Mammary epithelial cell (primary cell): ENCODE measurements at regions of chr1 and their contacts with region 1.

Region 1: GRCh38 chr1:39158327-39159086 is 46.0 kb upstream of the MACF1 start:
- DNase-seq: peak; percentile 82
- H3K4me3 ChIP-seq: peak overlapping the region; percentile 17 to 30 (median 24)
- H3K27ac ChIP-seq: peak overlapping the region; percentile 98
- H3K4me1 ChIP-seq: peaks cover 61% of the 10 kb centered on the region
- H3K27me3 ChIP-seq: no peaks in the 10 kb centered on the region
- CTCF ChIP-seq: no peak

Region 2: DNA sequence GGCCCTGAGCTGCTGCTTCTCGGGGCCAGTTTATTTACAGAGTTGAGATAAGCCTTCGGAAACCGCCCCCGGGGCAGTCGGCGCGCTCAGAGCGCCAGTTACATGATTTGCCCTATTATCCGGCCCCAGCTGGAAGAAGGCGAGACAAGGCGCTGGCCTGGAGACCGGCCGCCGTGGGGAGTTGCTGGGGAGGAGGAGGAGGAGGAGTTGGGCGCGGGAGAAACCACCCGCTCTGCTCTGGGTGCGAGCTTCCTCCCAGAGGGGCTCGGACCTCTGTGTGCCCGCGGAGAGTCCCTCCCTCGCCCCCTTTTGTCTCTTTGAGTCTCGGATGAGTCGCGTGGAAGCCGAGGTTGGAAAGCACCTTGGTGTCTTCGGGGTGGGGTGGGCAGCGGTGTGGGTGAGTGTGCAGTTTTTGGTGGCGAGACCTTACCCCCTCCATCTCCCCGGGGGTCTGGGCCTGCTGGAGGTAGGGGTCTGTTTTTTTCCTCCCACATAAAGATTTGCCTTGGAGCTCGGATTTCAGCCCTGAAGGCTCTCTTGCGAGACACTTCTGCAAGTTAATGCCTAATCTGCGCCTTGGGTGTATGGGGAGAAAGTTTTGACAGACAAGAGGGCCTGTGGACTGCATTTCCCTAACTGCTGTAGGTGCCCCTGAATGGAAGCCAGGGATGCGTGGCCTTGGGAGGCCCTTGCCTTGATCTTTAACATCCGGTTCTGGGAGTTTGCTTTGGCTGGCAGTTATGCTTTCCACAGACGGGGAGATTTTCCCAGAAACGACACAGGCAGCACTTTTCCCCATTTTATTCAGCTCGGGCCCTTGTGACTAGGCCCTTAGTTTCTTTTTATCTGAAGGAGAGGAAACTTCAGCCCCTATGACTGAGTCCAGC is 52.4 kb before region 1 on chr1:
- CTCF ChIA-PET with region 1: no interaction called
- dilution Hi-C with region 1: no loop called
- in situ Hi-C with region 1: no loop called
- intact Hi-C with region 1: loop called (anchors 2 kb)
- DNase-seq: peak; percentile 53
- H3K4me3 ChIP-seq: peak overlapping the region; percentile 50 to 76 (median 63)
- H3K27ac ChIP-seq: peak overlapping the region; percentile 76
- H3K4me1 ChIP-seq: peaks cover 56% of the 10 kb centered on the region
- H3K27me3 ChIP-seq: no peaks in the 10 kb centered on the region
- CTCF ChIP-seq: no peak

Region 3: DNA sequence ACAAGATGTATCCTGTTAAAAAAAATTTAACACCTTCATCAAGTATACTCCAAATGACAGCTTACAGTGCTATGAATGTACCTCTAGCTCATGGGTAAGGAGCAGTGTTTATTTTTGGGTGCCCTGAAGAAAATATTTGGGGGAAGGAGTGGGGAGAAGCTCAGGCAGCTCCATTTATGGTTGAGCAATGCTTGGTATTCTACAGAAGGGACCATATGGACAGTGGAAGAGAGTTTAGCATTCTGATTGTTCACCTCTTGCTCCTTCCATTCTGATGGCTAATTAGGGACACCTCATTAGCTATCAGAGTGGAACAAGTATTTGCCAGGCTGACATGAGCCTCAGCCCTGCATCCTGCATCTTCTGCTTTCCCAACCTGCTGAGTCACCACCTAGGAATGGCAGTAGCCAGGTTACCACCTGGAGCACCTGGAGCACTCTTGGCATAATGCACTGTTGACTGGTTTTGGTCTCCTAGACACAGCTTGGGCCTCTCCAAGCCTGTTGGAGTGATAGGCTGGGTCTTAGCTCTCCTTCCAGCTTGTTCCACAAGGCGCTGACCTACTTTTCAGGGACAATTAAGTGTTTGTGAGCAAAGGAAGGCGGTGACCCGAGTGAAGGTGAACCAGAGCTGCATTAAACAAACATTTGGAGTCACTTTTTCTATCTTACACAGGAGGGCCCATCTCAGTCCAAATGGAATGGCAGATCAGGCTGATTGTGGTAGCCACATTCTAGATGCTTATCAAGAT is 15.9 kb before region 1 on chr1:
- CTCF ChIA-PET with region 1: no interaction called
- dilution Hi-C with region 1: no loop called
- in situ Hi-C with region 1: no loop called
- intact Hi-C with region 1: loop called (anchors 1 kb)
- DNase-seq: peak; percentile 97
- H3K4me3 ChIP-seq: no peak overlapping the region
- H3K27ac ChIP-seq: peak overlapping the region; percentile 84
- H3K4me1 ChIP-seq: peaks cover 50% of the 10 kb centered on the region
- H3K27me3 ChIP-seq: no peaks in the 10 kb centered on the region
- CTCF ChIP-seq: peak; percentile 7 to 14

Region 4: GRCh38 chr1:39183503-39184353 is 25.2 kb after region 1 on chr1:
- CTCF ChIA-PET with region 1: interaction called, 3 read pairs
- dilution Hi-C with region 1: no loop called
- in situ Hi-C with region 1: no loop called
- intact Hi-C with region 1: loop called (anchors 2 kb)
- DNase-seq: peak; percentile 100
- H3K4me3 ChIP-seq: no peak overlapping the region
- H3K27ac ChIP-seq: peak overlapping the region; percentile 93
- H3K4me1 ChIP-seq: peaks cover 59% of the 10 kb centered on the region
- H3K27me3 ChIP-seq: no peaks in the 10 kb centered on the region
- CTCF ChIP-seq: peak; percentile 40 to 52

Region 5: GRCh38 chr1:39189592-39190041 is 31.1 kb after region 1 on chr1:
- CTCF ChIA-PET with region 1: interaction called, 3 read pairs
- dilution Hi-C with region 1: loop called (anchors 5 kb)
- in situ Hi-C with region 1: no loop called
- intact Hi-C with region 1: no loop called
- DNase-seq: peak; percentile 63
- H3K4me3 ChIP-seq: no peak overlapping the region
- H3K27ac ChIP-seq: peak overlapping the region; percentile 96
- H3K4me1 ChIP-seq: peaks cover 69% of the 10 kb centered on the region
- H3K27me3 ChIP-seq: no peaks in the 10 kb centered on the region
- CTCF ChIP-seq: no peak